Dendritic cell treated with granulocyte-macrophage colony-stimulating factor and Interleukin-4, amounts not matched to agents 40 ng/mL and 50 ng/mL, for 4 days (primary cell): ENCODE measurements at regions of chr3 and their contacts with region 1.

Region 1: DNA sequence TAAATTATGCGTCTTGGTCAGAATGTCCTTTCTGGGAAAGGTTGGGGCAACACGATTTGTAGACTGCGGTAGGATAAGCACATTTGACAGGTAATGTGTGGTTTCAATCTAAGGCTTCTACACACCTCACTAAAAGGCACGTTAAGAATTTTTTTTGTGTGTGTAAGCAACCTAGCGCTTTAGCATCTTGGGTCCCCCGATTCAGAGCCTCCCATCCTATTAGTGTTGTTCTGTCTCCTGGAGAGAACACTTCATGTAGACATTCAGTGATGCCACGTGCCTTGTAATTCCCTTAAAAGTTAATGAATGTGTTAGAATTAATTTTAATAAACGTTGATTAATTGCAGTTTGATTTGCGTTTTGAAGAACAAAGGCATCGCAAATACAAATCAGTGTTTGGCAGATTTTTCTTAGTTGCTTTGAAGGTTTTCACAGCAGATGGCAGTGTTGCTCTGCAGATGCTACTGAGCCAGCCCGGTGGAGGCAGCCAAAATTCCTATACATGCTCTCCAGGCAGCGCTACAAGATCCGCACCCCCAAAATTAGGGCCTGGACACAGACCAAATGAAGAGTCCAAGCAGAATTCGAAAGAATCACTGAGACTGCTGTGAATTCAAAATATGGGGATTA is 63.5 kb downstream of the OTOL1 start:
- H3K4me3 Mint-ChIP-seq: no peak overlapping the region
- H3K27ac Mint-ChIP-seq: no peak overlapping the region
- H3K4me1 Mint-ChIP-seq: no peaks in the 10 kb centered on the region
- H3K27me3 Mint-ChIP-seq: no peaks in the 10 kb centered on the region

Region 2: GRCh38 chr3:163490119-163490518 is 1930.0 kb after region 1 on chr3:
- intact Hi-C with region 1: loop called (anchors 5 kb)
- H3K4me3 Mint-ChIP-seq: no peak overlapping the region
- H3K27ac Mint-ChIP-seq: no peak overlapping the region
- H3K4me1 Mint-ChIP-seq: no peaks in the 10 kb centered on the region
- H3K27me3 Mint-ChIP-seq: no peaks in the 10 kb centered on the region